CD4-positive, alpha-beta memory T cell (primary cell): ENCODE measurements at regions of chr7 and their contacts with region 1.

Region 1: DNA sequence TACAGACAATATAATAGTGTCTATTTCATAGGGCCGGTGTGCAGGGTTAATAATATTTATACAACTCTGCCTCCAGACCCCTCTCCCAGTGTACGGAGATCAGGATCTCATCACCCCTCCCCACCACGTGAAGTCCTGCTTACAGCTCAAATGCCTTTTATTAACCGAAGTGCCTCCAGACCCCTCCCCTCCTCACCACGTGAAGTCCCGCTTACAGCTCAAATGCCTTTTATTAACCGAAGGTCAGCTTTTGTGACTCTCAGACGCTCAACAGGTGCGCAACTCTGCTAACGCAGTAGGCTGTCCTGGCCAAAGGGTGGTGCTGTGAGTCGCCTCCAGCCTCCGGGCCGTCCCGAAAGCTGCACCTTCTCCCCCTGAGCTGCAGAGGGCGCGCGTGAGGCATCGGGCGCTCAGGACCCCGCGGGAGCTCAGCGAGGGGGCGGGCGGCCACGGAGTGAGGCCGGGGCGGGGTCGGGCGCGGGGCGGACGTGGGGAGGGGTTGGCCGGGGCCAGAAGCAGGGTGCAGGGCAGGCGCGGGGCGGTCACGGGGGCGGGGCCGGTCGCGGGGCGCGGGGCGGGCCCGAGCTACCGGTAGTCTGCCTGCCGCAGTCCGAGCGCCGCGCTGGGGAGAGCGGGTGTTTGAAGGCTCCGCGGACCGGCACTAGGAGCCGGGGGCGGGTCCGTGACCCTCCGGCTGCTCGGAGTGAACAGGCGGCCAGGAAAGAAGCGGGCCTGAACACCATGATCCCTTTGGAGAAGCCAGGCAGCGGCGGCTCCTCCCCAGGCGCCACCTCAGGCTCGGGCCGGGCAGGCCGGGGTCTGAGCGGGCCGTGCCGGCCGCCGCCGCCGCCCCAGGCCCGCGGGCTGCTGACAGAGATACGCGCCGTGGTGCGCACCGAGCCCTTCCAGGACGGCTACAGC is at the start of gene STK17A:
- DNase-seq: peak; percentile 92 to 99 (median 96)
- H3K4me3 ChIP-seq: peak within 1 kb of the TSS; percentile 73 to 97
- H3K4me3 Mint-ChIP-seq: peak within 1 kb of the TSS; percentile 93 to 99 (median 98)
- H3K27ac ChIP-seq: peak within 1 kb of the TSS; percentile 87
- H3K27ac Mint-ChIP-seq: peak within 1 kb of the TSS; percentile 93 to 100 (median 98)
- H3K4me1 ChIP-seq: peaks cover 19% of the 10 kb centered on the region
- H3K4me1 Mint-ChIP-seq: peaks cover 13 to 47% (median 18%) of the 10 kb centered on the region in 4 donors
- H3K27me3 ChIP-seq: no peaks in the 10 kb centered on the region
- H3K27me3 Mint-ChIP-seq: peaks cover 2 to 9% of the 10 kb centered on the region in 2 donors
- total RNA-seq, gene STK17A: 118 to 119 TPM

Region 2: GRCh38 chr7:43531700-43532099 is 51.1 kb before region 1 on chr7:
- CTCF ChIA-PET with region 1: no interaction called
- POLR2A ChIA-PET with region 1: no interaction called
- intact Hi-C with region 1: no loop called
- DNase-seq: no peak
- H3K4me3 ChIP-seq: no peak overlapping the region
- H3K4me3 Mint-ChIP-seq: no peak overlapping the region
- H3K27ac ChIP-seq: no peak overlapping the region
- H3K27ac Mint-ChIP-seq: no peak overlapping the region
- H3K4me1 ChIP-seq: no peaks in the 10 kb centered on the region
- H3K4me1 Mint-ChIP-seq: no peaks in the 10 kb centered on the region
- H3K27me3 ChIP-seq: no peaks in the 10 kb centered on the region
- H3K27me3 Mint-ChIP-seq: peaks cover 0 to 3% of the 10 kb centered on the region in 2 donors

Region 3: DNA sequence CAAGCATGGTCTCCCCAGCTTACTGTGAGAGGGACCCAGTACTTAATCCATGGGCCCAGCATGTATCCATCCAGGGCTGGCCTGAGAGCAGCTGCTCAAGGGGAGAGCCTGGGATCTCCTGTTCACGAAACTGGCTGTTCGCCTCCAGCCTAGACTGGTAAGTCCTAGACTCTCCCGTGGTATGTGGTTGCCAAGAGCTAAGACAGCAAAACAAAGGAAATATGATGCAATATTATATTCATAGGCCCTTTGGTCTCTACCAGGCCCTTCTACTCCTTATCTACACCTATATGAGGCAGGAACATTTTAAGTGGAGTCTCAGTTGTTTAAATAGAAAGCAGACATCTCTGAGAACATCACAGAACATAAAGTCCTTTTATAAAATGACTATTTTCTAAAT is 28.8 kb before region 1 on chr7:
- CTCF ChIA-PET with region 1: interaction called, 13 read pairs
- POLR2A ChIA-PET with region 1: interaction called, 4 read pairs
- intact Hi-C with region 1: no loop called
- DNase-seq: peak in 2 of 5 donors; percentile 6 to 35
- H3K4me3 ChIP-seq: no peak overlapping the region
- H3K4me3 Mint-ChIP-seq: peak overlapping the region in 6 of 8 donors; percentile 4 to 84 (median 56)
- H3K27ac ChIP-seq: no peak overlapping the region
- H3K27ac Mint-ChIP-seq: peak overlapping the region in 3 of 7 donors; percentile 17 to 86 (median 72)
- H3K4me1 ChIP-seq: peaks cover 26% of the 10 kb centered on the region
- H3K4me1 Mint-ChIP-seq: peaks cover 15 to 29% (median 17%) of the 10 kb centered on the region in 4 donors
- H3K27me3 ChIP-seq: no peaks in the 10 kb centered on the region
- H3K27me3 Mint-ChIP-seq: peaks cover 7 to 8% of the 10 kb centered on the region in 2 donors

Region 4: GRCh38 chr7:43618073-43618472 is 35.3 kb after region 1 on chr7:
- CTCF ChIA-PET with region 1: interaction called, 46 read pairs
- POLR2A ChIA-PET with region 1: interaction called, 39 read pairs
- intact Hi-C with region 1: no loop called
- DNase-seq: no peak
- H3K4me3 ChIP-seq: no peak overlapping the region
- H3K4me3 Mint-ChIP-seq: no peak overlapping the region
- H3K27ac ChIP-seq: no peak overlapping the region
- H3K27ac Mint-ChIP-seq: no peak overlapping the region
- H3K4me1 ChIP-seq: peaks cover 99% of the 10 kb centered on the region
- H3K4me1 Mint-ChIP-seq: peaks cover 5 to 52% (median 37%) of the 10 kb centered on the region in 4 donors
- H3K27me3 ChIP-seq: no peaks in the 10 kb centered on the region
- H3K27me3 Mint-ChIP-seq: no peaks in the 10 kb centered on the region

Region 5: DNA sequence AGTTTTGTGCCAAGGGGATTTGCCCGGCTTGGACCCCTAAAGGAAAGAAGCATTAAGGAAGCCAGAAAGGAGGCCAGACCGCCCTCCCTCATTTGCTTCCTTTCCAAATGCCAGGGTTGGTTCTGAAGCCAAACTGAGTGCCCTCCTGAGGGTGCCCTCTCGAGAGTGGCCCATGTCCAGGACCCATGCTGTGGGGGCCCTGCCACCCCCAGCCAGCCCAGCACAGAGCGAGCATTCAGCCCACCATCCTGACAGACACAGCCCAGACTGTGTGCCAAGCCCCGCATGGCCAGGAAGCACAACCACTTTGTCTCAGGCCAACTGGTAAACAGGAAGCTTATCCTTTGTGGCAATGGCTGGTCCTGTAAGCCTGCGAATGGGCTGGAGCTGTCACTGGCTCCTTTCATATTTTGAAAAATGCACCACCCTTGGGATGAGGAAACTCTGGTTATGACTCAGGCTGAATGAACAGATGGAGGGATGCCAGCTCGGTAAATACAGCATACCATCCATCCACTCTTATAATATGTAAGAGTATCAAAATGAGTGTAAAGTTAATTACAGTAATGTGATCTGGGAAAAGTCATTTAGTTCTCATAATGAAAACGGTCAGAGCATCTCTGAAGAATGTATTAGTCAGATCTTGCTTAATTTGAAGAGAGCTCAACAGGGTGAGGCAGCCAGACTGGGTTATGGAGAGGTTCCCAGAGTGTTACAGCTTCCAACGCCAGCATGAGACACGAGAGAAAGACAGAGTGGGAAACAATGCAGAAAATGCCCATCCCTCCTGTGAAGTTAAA is 65.1 kb after region 1 on chr7:
- CTCF ChIA-PET with region 1: interaction called, 199 read pairs
- POLR2A ChIA-PET with region 1: interaction called, 393 read pairs
- intact Hi-C with region 1: loop called (anchors 1 kb)
- DNase-seq: peak in 3 of 5 donors; percentile 19 to 68 (median 24)
- H3K4me3 ChIP-seq: peak overlapping the region; percentile 3 to 64
- H3K4me3 Mint-ChIP-seq: peak overlapping the region; percentile 71 to 90 (median 82)
- H3K27ac ChIP-seq: peak overlapping the region; percentile 70
- H3K27ac Mint-ChIP-seq: peak overlapping the region; percentile 84 to 97 (median 91)
- H3K4me1 ChIP-seq: peaks cover 99% of the 10 kb centered on the region
- H3K4me1 Mint-ChIP-seq: peaks cover 78 to 99% (median 88%) of the 10 kb centered on the region in 4 donors
- H3K27me3 ChIP-seq: no peaks in the 10 kb centered on the region
- H3K27me3 Mint-ChIP-seq: no peaks in the 10 kb centered on the region

Region 6: DNA sequence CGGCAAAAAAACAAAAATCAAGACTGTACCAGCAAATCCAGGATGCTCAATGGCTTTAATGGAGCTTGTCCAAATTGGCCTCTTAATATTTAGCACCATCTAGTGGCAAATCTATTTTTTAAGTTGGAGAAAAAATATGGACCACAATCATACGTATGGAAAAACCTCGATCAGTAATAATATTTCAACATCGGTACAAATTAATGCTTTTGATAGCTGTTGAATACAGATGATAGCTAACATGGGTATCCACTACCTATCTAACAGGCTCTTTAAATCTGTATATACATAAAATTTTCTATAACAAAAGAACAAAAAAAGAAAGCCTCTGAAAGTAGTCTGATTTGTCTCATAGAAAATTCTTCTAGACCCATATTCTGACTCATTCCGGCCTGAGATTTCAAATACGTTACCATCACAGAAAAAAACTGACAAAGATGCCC is 117.3 kb after region 1 on chr7:
- CTCF ChIA-PET with region 1: interaction called, 670 read pairs
- POLR2A ChIA-PET with region 1: interaction called, 262 read pairs
- intact Hi-C with region 1: loop called (anchors 1 kb)
- DNase-seq: peak in 4 of 5 donors; percentile 62 to 70 (median 68)
- H3K4me3 ChIP-seq: no peak overlapping the region
- H3K4me3 Mint-ChIP-seq: peak overlapping the region in 6 of 8 donors; percentile 4 to 53 (median 32)
- H3K27ac ChIP-seq: no peak overlapping the region
- H3K27ac Mint-ChIP-seq: peak overlapping the region in 6 of 7 donors; percentile 48 to 85 (median 70)
- H3K4me1 ChIP-seq: peaks cover 23% of the 10 kb centered on the region
- H3K4me1 Mint-ChIP-seq: peaks cover 15 to 31% (median 19%) of the 10 kb centered on the region in 4 donors
- H3K27me3 ChIP-seq: no peaks in the 10 kb centered on the region
- H3K27me3 Mint-ChIP-seq: no peaks in the 10 kb centered on the region

Region 7: DNA sequence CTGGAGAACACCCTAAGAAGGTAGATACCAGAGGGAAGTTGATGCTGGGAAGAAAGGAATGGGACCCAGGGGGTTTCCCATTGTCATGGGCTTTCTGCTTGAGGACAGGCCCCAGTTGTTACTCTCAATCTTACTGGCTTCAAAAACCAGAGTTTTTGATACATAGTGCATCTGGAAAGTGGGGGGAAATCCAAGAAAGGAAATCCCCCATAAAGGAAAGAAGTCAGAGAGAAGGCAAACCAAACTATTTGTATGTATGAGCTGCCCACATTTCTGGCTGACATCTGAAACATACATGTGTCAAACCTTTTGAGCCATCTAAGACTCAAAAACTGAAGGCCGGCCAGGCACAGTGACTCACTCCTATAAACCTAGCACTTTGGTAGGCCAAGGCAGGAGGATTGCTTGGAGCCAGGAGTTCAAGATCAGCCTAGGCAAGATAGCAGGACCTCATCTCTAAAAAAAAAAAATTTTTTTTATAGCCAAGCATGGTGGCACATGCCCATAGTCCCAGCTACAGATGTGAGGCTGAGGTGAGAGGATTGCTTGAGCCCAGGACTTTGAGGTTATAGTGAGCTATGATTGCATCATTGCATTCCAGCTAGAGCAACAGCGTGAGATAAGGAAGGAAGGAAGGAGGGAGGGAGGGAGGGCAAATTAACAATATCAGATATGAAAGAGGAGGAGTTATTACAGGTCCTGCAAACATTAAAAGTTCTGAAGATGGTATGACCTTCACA is 153.2 kb after region 1 on chr7:
- CTCF ChIA-PET with region 1: interaction called, 32 read pairs
- POLR2A ChIA-PET with region 1: interaction called, 19 read pairs
- intact Hi-C with region 1: no loop called
- DNase-seq: no peak
- H3K4me3 ChIP-seq: no peak overlapping the region
- H3K4me3 Mint-ChIP-seq: no peak overlapping the region
- H3K27ac ChIP-seq: no peak overlapping the region
- H3K27ac Mint-ChIP-seq: peak overlapping the region in 1 of 7 donors; percentile 3
- H3K4me1 ChIP-seq: no peaks in the 10 kb centered on the region
- H3K4me1 Mint-ChIP-seq: peaks cover 0 to 5% (median 4%) of the 10 kb centered on the region in 4 donors
- H3K27me3 ChIP-seq: no peaks in the 10 kb centered on the region
- H3K27me3 Mint-ChIP-seq: peaks cover 0 to 1% of the 10 kb centered on the region in 2 donors

Region 8: GRCh38 chr7:44460325-44460724 is 877.6 kb after region 1 on chr7:
- CTCF ChIA-PET with region 1: no interaction called
- POLR2A ChIA-PET with region 1: no interaction called
- intact Hi-C with region 1: no loop called
- DNase-seq: peak; percentile 87 to 90 (median 87)
- H3K4me3 ChIP-seq: no peak overlapping the region
- H3K4me3 Mint-ChIP-seq: peak overlapping the region; percentile 1 to 80 (median 60)
- H3K27ac ChIP-seq: peak overlapping the region; percentile 22
- H3K27ac Mint-ChIP-seq: peak overlapping the region; percentile 76 to 93 (median 89)
- H3K4me1 ChIP-seq: peaks cover 73% of the 10 kb centered on the region
- H3K4me1 Mint-ChIP-seq: peaks cover 50 to 82% (median 68%) of the 10 kb centered on the region in 4 donors
- H3K27me3 ChIP-seq: no peaks in the 10 kb centered on the region
- H3K27me3 Mint-ChIP-seq: no peaks in the 10 kb centered on the region